ENCODE measurements at regions of chr13 and their contacts with region 1.

Region 1: DNA sequence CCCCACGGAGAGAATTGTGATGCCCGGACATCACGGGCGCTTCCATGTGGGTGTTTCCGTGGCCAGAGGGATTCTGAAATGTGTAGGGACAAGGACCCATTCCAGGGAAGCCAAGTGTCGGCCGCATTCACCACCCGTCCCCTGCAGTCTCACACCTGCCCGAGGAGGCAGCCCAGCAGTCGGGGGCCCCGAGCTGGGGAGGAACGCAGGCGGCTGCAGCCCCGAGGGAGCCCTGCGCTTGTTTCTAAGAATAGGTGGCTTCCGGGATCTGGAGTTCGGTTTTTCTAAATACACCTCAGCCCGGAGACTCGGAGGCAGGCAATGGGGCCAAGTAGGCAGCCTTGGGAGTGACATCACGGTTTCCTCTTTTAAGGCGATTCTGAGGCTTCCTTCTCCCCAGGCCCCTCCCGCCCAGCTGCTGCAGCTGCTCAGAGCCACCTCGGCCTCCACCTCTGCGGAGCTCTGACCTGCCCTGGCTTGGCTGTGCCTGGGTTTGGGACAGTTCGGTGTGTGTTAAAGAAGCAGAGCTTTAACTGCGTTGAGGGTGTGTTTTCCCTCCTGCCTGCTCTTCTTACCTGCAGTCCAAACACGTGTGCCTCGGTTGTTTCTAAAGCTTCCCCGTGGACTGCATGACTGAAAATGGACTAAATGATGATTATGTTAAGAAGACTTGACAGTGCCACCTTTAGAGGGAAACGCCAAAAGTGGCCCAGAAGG is 80.5 kb downstream of the COL4A2 start:
- H3K4me3 ChIP-seq: peak overlapping the region; percentile 2
- H3K27ac ChIP-seq: no peak overlapping the region
- H3K4me1 ChIP-seq: peaks cover 11% of the 10 kb centered on the region
- CTCF ChIP-seq: no peak

Region 2: DNA sequence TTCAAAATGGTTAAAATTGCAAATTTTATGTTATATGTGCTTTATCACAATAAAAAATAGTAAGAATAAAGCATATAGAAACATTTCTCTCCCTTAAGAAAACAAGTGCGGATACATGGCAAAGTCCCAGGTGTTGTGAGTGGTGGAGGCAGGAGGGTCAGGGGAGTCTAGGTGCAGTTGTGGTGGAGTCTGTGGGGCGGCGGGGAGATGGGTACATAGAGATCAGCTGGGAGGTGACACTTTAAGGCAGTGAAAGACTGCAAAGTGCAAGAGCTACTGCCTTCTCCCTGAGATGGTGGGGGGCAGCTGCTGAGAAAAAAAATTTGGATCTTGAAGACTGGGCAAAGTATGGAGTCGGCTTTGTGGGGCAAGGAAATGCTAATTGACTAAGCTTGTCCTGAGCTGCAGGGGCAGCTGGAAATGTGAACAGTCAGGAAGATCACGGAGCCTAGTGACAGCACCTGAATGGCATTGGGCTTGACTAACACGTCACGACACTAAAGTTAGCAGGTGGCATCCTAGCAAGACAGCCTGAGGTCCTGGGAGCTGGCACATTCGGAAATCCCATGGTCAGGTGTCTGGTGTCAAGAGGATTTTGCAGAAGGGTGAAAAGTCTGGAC is 528.2 kb before region 1 on chr13:
- CTCF ChIA-PET with region 1: no interaction called
- POLR2A ChIA-PET with region 1: no interaction called
- H3K4me3 ChIP-seq: no peak overlapping the region
- H3K27ac ChIP-seq: no peak overlapping the region
- H3K4me1 ChIP-seq: no peaks in the 10 kb centered on the region
- CTCF ChIP-seq: no peak

Region 3: DNA sequence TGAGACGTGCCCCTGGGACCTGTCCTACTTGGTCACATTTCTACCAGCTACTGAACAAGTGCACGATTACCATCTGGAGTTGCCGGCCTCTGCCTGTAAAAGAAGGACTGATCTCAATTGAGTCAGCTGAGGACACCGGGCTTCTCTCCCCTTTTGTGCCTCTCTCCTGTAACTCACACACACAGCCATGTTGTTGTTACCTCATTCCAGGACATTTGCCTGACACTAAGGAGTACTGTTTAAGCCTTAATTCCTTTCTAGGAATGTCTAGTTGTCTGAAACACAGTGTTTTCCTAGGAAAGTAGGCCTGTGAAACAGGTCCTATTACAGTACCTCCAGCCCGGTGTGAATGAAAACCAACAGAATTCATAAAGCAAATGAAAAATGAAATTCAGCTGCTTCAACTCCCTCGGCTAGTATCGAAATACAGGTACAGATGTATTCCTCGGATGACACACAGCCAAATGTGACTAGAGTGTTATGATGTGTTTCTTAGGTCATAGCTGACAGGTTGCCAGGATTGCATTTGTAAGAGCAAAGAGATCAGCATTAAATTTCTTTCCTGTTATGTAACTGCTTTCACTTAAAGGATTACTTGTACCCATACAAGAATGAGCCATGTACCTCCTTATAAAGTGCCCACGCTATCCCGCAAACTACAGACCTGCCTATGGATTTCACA is 449.2 kb before region 1 on chr13:
- CTCF ChIA-PET with region 1: no interaction called
- POLR2A ChIA-PET with region 1: no interaction called
- H3K4me3 ChIP-seq: no peak overlapping the region
- H3K27ac ChIP-seq: no peak overlapping the region
- H3K4me1 ChIP-seq: no peaks in the 10 kb centered on the region
- CTCF ChIP-seq: no peak

Region 4: DNA sequence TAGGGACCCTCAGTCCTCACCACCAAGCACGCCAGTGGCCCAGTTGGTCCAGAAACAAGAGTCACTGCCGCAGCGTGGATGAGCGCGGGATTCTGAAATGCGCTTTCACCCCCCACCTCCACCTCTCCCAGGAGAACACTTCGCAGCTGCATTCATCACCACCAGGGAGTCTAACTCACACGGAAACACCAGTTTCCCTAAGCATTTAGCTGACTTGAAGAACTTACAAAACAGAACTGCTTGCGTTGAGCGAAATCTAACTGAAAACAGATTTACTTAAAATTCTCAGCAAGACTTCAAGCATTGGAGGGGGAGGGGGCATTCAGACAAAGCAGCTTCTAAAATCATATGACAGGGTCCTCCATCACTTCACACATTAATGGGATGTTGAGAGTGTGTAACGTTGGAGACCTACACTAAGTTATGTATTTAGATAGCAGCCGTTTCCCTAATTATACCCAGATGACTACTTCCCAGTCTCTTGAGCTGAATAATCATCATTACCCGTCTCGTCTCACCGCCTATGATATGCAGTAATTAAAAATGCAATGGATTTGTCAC is 342.9 kb before region 1 on chr13:
- CTCF ChIA-PET with region 1: no interaction called
- POLR2A ChIA-PET with region 1: no interaction called
- H3K4me3 ChIP-seq: no peak overlapping the region
- H3K27ac ChIP-seq: no peak overlapping the region
- H3K4me1 ChIP-seq: no peaks in the 10 kb centered on the region
- CTCF ChIP-seq: no peak

Region 5: DNA sequence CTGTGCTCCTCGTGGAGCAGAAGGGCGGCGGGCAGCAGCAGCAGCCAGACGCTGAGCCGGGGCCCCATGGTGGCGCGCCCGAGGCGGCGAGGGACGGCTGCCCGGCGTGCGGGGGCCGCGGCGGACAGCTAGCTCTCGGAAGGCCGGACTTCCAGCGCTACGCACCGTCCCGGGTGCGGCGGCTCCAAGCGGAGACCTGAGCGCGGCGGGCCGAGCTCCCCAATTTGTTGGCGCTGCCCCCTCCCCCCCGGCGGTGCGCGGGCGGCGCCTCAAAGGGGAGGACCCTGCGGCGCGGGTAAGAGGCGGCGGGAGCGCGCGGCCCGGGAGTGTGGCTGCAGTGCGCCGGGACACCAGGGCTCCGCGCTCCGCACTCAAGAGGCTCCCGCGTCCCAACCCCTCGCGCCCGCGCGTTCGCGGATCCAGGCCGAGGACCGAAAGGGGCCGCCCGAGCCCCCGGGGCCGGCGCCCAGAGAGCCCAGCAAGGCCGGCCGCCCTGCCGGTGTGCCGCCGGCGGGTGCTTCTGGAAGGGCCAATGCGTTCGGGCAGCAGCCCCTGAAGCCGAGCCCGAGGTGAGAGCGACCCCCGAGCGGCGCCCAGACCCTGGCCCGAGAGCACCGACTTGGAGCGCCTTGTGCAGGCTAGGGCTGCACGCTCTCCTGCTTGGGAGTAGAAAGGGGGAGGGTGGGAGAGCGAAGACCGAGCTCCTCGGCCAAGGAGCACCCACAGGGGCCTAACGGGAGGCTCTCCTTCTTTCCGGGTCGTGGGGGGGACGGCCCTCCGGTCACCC is 80.4 kb before region 1 on chr13 and contains the starts of genes COL4A1 and COL4A2:
- CTCF ChIA-PET with region 1: interaction called, 3 read pairs
- POLR2A ChIA-PET with region 1: interaction called, 19 read pairs
- H3K4me3 ChIP-seq: peak within 1 kb of the TSS; percentile 70
- H3K27ac ChIP-seq: peak within 1 kb of the TSS; percentile 81; the same call in 1 of the 2 replicates
- H3K4me1 ChIP-seq: no peaks in the 10 kb centered on the region
- CTCF ChIP-seq: no peak

Region 6: GRCh38 chr13:110398564-110399510 is 11.3 kb after region 1 on chr13:
- CTCF ChIA-PET with region 1: no interaction called
- POLR2A ChIA-PET with region 1: interaction called, 11 read pairs
- H3K4me3 ChIP-seq: no peak overlapping the region
- H3K27ac ChIP-seq: no peak overlapping the region
- H3K4me1 ChIP-seq: no peaks in the 10 kb centered on the region
- CTCF ChIP-seq: no peak

Measured in HEK293 (cell line).